T-cell (primary cell): ENCODE measurements at regions of chr11 and their contacts with region 1.

Region 1: DNA sequence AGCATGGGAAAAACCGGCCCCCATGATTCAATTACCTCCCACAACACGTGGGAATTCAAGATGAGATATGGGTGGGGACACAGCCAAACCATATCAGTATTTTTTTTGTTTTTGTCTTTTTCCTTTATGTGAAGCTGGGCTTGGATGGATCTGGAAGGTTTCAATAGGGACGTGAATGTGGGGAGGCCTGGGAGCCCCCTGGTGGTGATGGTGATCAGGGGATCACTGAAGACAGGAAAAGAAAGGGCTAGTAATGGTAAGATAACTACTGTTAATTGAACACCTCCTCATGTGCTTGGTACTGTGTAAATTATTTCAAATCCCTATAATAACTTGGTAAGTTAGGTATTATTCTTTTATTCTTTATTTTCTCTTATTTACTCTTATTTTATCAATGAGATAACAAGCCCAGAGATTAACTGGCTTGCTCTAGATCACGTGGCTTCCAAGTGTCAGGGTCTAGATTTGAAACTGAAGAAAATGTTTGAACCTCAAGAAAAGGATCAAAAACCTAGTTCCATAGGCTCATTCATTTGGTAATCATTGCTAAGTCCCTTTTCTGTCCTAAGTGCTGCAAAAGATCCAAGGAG is 364.2 kb downstream of the TENM4 start:
- DNase-seq: peak in 1 of 35 experiments; percentile 37
- ATAC-seq: no peak
- H3K4me3 ChIP-seq: no peak overlapping the region
- H3K4me3 Mint-ChIP-seq: no peak overlapping the region
- H3K27ac ChIP-seq: no peak overlapping the region
- H3K27ac Mint-ChIP-seq: no peak overlapping the region
- H3K4me1 ChIP-seq: no peaks in the 10 kb centered on the region
- H3K4me1 Mint-ChIP-seq: no peaks in the 10 kb centered on the region
- H3K27me3 ChIP-seq: peaks cover 0 to 8% of the 10 kb centered on the region in 2 experiments
- H3K27me3 Mint-ChIP-seq: no peaks in the 10 kb centered on the region

Region 2: GRCh38 chr11:78645226-78646202 is 431.1 kb before region 1 on chr11:
- CTCF ChIA-PET with region 1: interaction called, 3 to 15 read pairs
- POLR2A ChIA-PET with region 1: no interaction called
- DNase-seq: peak in 29 of 35 experiments; percentile 9 to 71 (median 37)
- ATAC-seq: peak in 2 of 4 experiments; percentile 56 to 70
- H3K4me3 ChIP-seq: no peak overlapping the region
- H3K4me3 Mint-ChIP-seq: peak overlapping the region in 2 of 3 donors; percentile 52 to 58
- H3K27ac ChIP-seq: no peak overlapping the region
- H3K27ac Mint-ChIP-seq: no peak overlapping the region
- H3K4me1 ChIP-seq: peaks cover 0 to 4% of the 10 kb centered on the region in 2 experiments
- H3K4me1 Mint-ChIP-seq: peaks cover 0 to 17% (median 6%) of the 10 kb centered on the region in 3 donors
- H3K27me3 ChIP-seq: no peaks in the 10 kb centered on the region
- H3K27me3 Mint-ChIP-seq: peaks cover 3 to 7% of the 10 kb centered on the region in 2 donors